CD4-positive, alpha-beta T cell (primary cell): ENCODE measurements at regions of chr20 and their contacts with region 1.

Region 1: GRCh38 chr20:17536944-17537444 is 5.8 kb upstream of the BFSP1 start:
- DNase-seq: peak; percentile 25 to 83 (median 52)
- ATAC-seq: peak; percentile 98
- H3K4me3 ChIP-seq: no peak overlapping the region
- H3K4me3 Mint-ChIP-seq: no peak overlapping the region
- H3K27ac ChIP-seq: no peak overlapping the region
- H3K27ac Mint-ChIP-seq: no peak overlapping the region
- H3K4me1 ChIP-seq: peaks cover 6% of the 10 kb centered on the region
- H3K4me1 Mint-ChIP-seq: no peaks in the 10 kb centered on the region
- H3K27me3 ChIP-seq: no peaks in the 10 kb centered on the region
- H3K27me3 Mint-ChIP-seq: peaks cover 35% of the 10 kb centered on the region
- CTCF ChIP-seq: peak; percentile 77

Region 2: DNA sequence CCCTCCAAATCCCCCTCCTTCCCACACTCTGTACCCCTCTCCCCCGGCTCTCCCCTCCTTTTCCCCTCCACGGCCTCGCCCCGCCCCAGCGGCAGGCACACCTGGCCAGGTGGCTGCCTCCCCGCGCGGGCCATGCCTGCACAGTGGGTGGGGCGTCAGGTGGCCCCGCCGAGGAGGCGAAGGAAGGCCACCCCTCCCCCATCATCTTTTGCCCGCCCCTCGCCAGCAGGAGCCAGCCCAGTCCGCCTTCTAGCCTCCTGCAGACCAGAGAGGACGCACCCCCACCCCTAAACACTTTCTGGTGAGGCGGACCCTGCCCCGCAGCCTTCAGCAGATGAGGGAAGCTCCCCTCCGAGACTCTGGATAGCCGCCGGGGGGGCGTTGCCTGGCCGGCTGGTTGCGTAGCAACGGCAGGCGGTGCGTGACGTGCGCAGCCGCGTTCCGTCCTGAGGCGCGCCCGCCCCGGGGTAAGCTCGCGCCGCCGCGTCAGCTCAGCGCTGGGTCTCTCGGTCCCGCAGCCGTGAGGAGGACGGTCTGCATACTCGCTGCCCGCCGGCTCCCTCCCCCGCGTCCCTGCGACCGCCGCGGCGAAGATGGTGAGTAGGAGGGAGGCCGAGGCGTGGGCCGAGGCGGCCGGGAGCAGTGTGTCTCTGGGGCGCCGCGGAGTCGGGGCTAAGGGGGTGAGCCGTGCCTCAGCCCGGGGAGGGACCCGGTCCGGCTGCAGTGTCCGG is 32.8 kb after region 1 on chr20 and contains the start of gene DSTN:
- CTCF ChIA-PET with region 1: interaction called, 15 read pairs
- POLR2A ChIA-PET with region 1: interaction called, 6 read pairs
- intact Hi-C with region 1: no loop called
- DNase-seq: peak; percentile 75 to 95 (median 82)
- ATAC-seq: peak; percentile 87
- H3K4me3 ChIP-seq: peak within 1 kb of the TSS; percentile 85
- H3K4me3 Mint-ChIP-seq: peak within 1 kb of the TSS; percentile 96
- H3K27ac ChIP-seq: peak within 1 kb of the TSS; percentile 53 to 55
- H3K27ac Mint-ChIP-seq: peak within 1 kb of the TSS; percentile 72
- H3K4me1 ChIP-seq: peaks cover 17% of the 10 kb centered on the region
- H3K4me1 Mint-ChIP-seq: peaks cover 34% of the 10 kb centered on the region
- H3K27me3 ChIP-seq: no peaks in the 10 kb centered on the region
- H3K27me3 Mint-ChIP-seq: no peaks in the 10 kb centered on the region
- CTCF ChIP-seq: no peak
- total RNA-seq, gene DSTN: 36.0 to 38.9 TPM

Region 3: GRCh38 chr20:17648791-17649730 is 112.1 kb after region 1 on chr20:
- CTCF ChIA-PET with region 1: interaction called, 10 read pairs
- POLR2A ChIA-PET with region 1: no interaction called
- intact Hi-C with region 1: loop called in 1 of 2 experiments (anchors 1 kb)
- DNase-seq: peak in 12 of 14 experiments; percentile 9 to 60 (median 25)
- ATAC-seq: peak; percentile 48
- H3K4me3 ChIP-seq: no peak overlapping the region
- H3K4me3 Mint-ChIP-seq: no peak overlapping the region
- H3K27ac ChIP-seq: no peak overlapping the region
- H3K27ac Mint-ChIP-seq: no peak overlapping the region
- H3K4me1 ChIP-seq: peaks cover 16% of the 10 kb centered on the region
- H3K4me1 Mint-ChIP-seq: no peaks in the 10 kb centered on the region
- H3K27me3 ChIP-seq: no peaks in the 10 kb centered on the region
- H3K27me3 Mint-ChIP-seq: no peaks in the 10 kb centered on the region
- CTCF ChIP-seq: peak; percentile 42

Region 4: GRCh38 chr20:17938871-17939619 is 402.1 kb after region 1 on chr20:
- CTCF ChIA-PET with region 1: interaction called, 4 read pairs
- POLR2A ChIA-PET with region 1: no interaction called
- intact Hi-C with region 1: loop called in 1 of 2 experiments (anchors 1 kb)
- DNase-seq: peak; percentile 20 to 76 (median 37)
- ATAC-seq: peak; percentile 97
- H3K4me3 ChIP-seq: no peak overlapping the region
- H3K4me3 Mint-ChIP-seq: no peak overlapping the region
- H3K27ac ChIP-seq: no peak overlapping the region
- H3K27ac Mint-ChIP-seq: peak overlapping the region; percentile 35
- H3K4me1 ChIP-seq: peaks cover 12% of the 10 kb centered on the region
- H3K4me1 Mint-ChIP-seq: peaks cover 11% of the 10 kb centered on the region
- H3K27me3 ChIP-seq: no peaks in the 10 kb centered on the region
- H3K27me3 Mint-ChIP-seq: no peaks in the 10 kb centered on the region
- CTCF ChIP-seq: peak; percentile 78